Heart left ventricle (tissue), 16 donors: ENCODE measurements at regions of chr22 and their contacts with region 1.

Region 1: GRCh38 chr22:47943729-47944700 is 1181.6 kb downstream of the TBC1D22A start:
- DNase-seq: no peak
- ATAC-seq: no peak
- H3K4me3 ChIP-seq: no peak overlapping the region
- H3K27ac ChIP-seq: no peak overlapping the region
- H3K4me1 ChIP-seq: no peaks in the 10 kb centered on the region
- H3K27me3 ChIP-seq: peaks cover 0 to 5% (median 0%) of the 10 kb centered on the region in 9 donors
- CTCF ChIP-seq: no peak
- POLR2A ChIP-seq: no peak

Region 2: DNA sequence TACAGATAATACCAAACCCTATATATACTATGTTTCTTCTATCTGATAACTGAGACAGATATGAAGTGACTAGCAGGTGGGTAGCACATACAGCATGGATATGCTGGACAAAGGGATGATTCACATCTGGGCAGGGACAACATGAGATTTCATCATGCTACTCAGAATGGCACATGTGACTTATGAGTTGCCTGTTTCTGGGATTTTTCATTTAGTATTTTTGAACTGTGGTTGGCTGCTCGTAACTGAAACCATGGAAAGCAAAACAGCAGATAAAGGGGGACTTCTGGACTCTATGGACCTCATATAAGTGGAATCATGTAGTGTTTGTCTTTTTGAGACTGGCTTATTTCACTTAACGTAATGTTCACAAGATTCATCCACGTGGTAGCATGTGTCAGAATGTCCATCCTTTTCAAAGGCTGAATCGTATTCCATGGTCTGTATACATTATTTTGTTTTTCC is 298.5 kb before region 1 on chr22:
- intact Hi-C with region 1: no loop called
- DNase-seq: no peak
- ATAC-seq: no peak
- H3K4me3 ChIP-seq: no peak overlapping the region
- H3K27ac ChIP-seq: no peak overlapping the region
- H3K4me1 ChIP-seq: no peaks in the 10 kb centered on the region
- H3K27me3 ChIP-seq: peaks cover 0 to 8% (median 0%) of the 10 kb centered on the region in 9 donors
- CTCF ChIP-seq: no peak
- POLR2A ChIP-seq: no peak

Region 3: DNA sequence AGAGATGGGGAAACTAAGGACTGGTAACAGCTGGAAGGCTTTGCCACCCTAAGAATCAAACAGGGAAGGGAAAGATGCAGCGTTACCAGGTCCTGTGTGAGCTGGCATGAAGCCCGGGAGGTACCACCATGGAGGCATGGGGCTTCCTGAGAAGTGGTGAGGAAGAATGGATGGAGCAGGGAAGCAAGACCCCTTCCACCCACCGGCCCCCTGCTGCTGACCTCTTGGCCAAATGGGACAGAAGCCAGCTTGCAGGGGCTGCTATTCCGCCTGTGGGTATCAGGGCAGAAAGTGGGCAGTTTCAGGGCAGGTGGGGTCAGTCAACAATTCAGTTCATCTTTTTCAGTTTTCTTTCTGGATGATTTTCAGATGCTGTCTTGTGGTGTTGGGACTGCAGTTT is 81.6 kb before region 1 on chr22:
- intact Hi-C with region 1: no loop called
- DNase-seq: no peak
- ATAC-seq: no peak
- H3K4me3 ChIP-seq: no peak overlapping the region
- H3K27ac ChIP-seq: no peak overlapping the region
- H3K4me1 ChIP-seq: no peaks in the 10 kb centered on the region
- H3K27me3 ChIP-seq: peaks cover 0 to 18% (median 0%) of the 10 kb centered on the region in 9 donors
- CTCF ChIP-seq: no peak
- POLR2A ChIP-seq: no peak

Region 4: GRCh38 chr22:48004038-48004437 is 60.0 kb after region 1 on chr22:
- intact Hi-C with region 1: loop called in 1 of 10 experiments (anchors 10 kb)
- DNase-seq: no peak
- ATAC-seq: no peak
- H3K4me3 ChIP-seq: no peak overlapping the region
- H3K27ac ChIP-seq: no peak overlapping the region
- H3K4me1 ChIP-seq: no peaks in the 10 kb centered on the region
- H3K27me3 ChIP-seq: peaks cover 0 to 13% (median 0%) of the 10 kb centered on the region in 9 donors
- CTCF ChIP-seq: no peak
- POLR2A ChIP-seq: no peak